GM12878 (cell line): ENCODE measurements at regions of chr10 and their contacts with region 1.

Region 1: DNA sequence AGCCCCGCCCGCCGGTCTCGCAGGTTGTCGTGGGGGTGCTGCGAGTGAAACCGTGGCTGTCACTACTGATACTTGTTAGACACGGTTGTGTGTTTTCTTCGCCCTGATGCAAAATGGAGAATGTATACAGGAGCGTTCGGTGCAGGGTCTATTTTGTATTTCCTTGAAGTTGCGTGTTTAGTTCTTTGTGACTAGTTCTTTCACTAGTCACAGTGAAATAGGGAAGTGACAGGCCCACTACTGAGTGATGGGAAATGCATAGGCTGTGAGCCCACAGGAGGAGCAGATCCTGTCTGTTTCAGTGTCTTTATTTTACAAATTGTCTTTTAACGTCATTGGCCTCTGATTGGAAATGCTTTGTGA is 675 bp downstream of the ABRAXAS2 start:
- DNase-seq: no peak
- ATAC-seq: peak; percentile 57
- H3K4me3 ChIP-seq: peak overlapping the region; percentile 80
- H3K27ac ChIP-seq: peak overlapping the region; percentile 70
- H3K4me1 ChIP-seq: no peaks in the 10 kb centered on the region
- H3K27me3 ChIP-seq: no peaks in the 10 kb centered on the region
- CTCF ChIP-seq: no peak
- EP300 ChIP-seq: no peak
- POLR2A ChIP-seq: no peak
- RAD21 ChIP-seq: no peak

Region 2: DNA sequence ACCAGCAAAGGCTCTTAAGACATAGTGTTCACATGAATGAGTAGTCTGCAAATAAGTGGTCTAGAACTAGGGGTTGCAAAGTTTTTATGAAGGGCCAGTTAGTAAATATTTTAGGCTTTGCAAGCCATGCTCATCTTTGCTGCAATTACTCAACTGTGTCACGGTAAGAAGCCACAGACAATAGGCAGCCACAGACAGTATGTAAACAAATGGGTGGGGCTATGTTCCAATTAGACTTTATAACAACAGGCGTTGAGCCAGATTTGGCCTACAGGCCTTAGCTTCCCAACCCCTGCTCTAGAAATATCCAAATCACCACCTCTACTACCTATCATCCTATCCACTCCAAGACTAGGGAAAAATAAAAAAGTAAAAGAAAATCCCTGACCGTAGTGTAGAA is 1802.9 kb before region 1 on chr10:
- CTCF ChIA-PET with region 1: no interaction called
- POLR2A ChIA-PET with region 1: no interaction called
- RAD21 ChIA-PET with region 1: no interaction called
- SMC1A ChIA-PET with region 1: no interaction called
- in situ Hi-C with region 1: no loop called
- intact Hi-C with region 1: loop called (anchors 5 kb)
- DNase-seq: no peak
- ATAC-seq: peak; percentile 80
- H3K4me3 ChIP-seq: no peak overlapping the region
- H3K27ac ChIP-seq: no peak overlapping the region; the same call in 1 of the 2 replicates
- H3K4me1 ChIP-seq: peaks cover 29% of the 10 kb centered on the region
- H3K27me3 ChIP-seq: no peaks in the 10 kb centered on the region
- CTCF ChIP-seq: no peak
- EP300 ChIP-seq: no peak
- POLR2A ChIP-seq: no peak
- RAD21 ChIP-seq: no peak

Region 3: DNA sequence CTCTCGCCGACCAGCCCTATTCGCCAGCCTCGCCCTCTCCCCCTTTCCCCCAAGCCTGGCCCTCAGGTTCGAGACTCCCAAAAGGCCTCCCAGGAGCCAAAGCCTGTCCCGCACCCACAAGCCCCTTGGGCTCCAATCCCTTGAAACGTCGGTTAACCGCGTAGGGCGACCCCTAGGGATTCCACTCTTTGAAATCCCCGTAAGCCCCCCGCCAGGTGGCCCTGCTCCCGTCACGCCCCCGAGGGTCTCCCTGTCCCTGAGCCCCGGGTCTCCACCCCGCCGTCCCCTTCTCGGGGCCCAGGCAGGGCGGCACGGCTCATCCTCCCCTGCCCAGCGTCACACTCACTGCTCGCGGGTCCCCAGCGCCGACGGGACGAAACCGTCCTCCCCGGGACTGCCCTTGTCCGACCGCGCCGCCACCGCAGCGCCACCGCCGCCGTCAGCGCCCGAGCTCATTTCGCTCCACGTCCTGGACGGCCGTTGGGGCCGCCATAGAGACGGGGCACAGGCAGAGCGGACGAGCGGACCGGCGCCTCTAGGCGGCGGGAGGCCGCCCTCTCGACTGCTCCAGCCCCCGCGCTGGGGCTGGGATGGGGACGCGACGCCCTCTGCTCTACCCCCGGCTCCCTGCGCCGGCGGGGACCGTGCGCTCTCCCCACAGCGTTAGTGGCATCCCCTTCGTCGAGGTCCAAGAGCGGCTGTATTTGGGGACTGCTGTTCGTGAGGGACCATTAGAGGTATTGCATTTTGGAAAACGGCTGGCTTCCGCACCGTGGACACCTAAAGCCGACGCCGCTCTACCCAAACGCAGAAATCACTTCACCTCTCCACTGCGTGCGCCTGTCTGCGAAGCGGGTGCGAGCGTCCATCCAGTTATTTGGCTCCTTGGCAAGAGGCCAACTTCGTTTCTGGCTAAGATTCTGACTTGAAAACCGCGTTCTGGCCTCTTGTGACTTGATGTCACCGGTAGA is 10.6 kb before region 1 on chr10 and contains the start of gene EEF1AKMT2:
- CTCF ChIA-PET with region 1: interaction called, 4 read pairs
- POLR2A ChIA-PET with region 1: no interaction called
- RAD21 ChIA-PET with region 1: interaction called, 7 read pairs
- SMC1A ChIA-PET with region 1: interaction called, 3 read pairs
- in situ Hi-C with region 1: no loop called
- intact Hi-C with region 1: loop called (anchors 1 kb)
- DNase-seq: peak; percentile 48
- ATAC-seq: peak; percentile 93
- H3K4me3 ChIP-seq: peak within 1 kb of the TSS; percentile 99
- H3K27ac ChIP-seq: peak within 1 kb of the TSS; percentile 88
- H3K4me1 ChIP-seq: no peaks in the 10 kb centered on the region
- H3K27me3 ChIP-seq: no peaks in the 10 kb centered on the region
- CTCF ChIP-seq: 0 out of 6 replicates have a peak, but pooled peaks of 1 of the 3 experiments have one; percentile 10
- EP300 ChIP-seq: no peak
- POLR2A ChIP-seq: peak; percentile 99
- RAD21 ChIP-seq: no peak
- polyA plus RNA-seq, gene EEF1AKMT2: 9.1 to 12.9 TPM